ENCODE measurements at regions of chr15 and their contacts with region 1.

Region 1: GRCh38 chr15:64856429-64857145 is 14.9 kb downstream of the PLEKHO2 start:
- DNase-seq: peak; percentile 31 to 94 (median 91)
- H3K4me3 ChIP-seq: peak overlapping the region in 10 of 59 donors; percentile 0 to 22 (median 10)
- H3K27ac ChIP-seq: peak overlapping the region; percentile 66 to 96 (median 90)
- H3K27me3 ChIP-seq: no peaks in the 10 kb centered on the region
- CTCF ChIP-seq: peak in 32 of 56 donors; percentile 13 to 58 (median 34)

Region 2: GRCh38 chr15:64619880-64620839 is 236.4 kb before region 1 on chr15:
- intact Hi-C with region 1: no loop called
- DNase-seq: no peak
- H3K4me3 ChIP-seq: no peak overlapping the region
- H3K27ac ChIP-seq: peak overlapping the region in 6 of 59 donors; percentile 4 to 23 (median 8)
- H3K27me3 ChIP-seq: no peaks in the 10 kb centered on the region
- CTCF ChIP-seq: no peak

Region 3: DNA sequence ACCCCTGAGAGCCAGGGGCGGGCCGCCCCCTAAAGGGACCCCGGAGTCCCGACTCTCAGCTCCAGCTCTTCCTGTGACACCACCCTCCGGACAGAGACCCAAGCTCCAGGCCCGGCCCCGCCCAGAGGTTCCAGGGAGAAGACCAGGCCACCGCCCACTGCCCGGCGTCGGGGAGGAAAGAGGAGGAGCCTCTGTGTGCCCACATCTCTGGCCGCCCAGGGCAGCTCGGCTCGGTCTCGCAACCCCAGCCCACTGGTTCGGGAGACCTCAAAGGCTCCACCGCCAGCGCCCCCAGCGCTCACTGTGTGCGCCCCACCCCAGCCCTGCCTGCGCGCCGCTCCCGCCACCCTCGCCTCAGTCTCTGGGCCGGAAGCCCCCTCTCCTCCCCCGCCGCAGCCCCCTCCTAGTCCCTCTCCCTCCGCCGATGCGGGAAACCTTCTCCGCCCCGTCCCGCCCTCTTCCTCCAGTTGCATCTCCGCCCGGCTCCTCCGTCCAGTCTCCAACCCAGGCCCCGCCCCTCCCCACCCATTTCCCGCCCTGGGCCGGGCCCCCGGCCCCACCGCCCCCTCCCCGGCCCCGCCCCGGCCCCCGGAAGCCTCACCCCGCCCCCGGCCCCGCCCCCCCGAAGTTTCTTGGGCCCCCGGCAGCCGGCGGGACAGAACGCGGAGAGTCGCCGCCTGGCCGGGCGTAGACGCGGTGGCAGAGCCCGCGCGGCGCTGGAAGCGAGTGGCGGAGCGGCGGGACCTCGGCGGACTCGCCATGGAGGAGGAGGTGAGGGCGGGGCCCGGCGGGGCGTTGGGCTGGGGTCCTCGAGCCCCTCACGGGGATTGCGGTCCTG is 15.1 kb before region 1 on chr15 and contains the start of gene PLEKHO2:
- intact Hi-C with region 1: loop called in 1 of 2 experiments (anchors 2 kb)
- DNase-seq: peak; percentile 46 to 94 (median 86)
- H3K4me3 ChIP-seq: peak within 1 kb of the TSS; percentile 54 to 94 (median 83)
- H3K27ac ChIP-seq: peak within 1 kb of the TSS; percentile 69 to 96 (median 90)
- H3K27me3 ChIP-seq: peaks cover 0 to 10% (median 0%) of the 10 kb centered on the region in 45 donors
- CTCF ChIP-seq: peak in 40 of 56 donors; percentile 7 to 56 (median 29)
- total RNA-seq, gene PLEKHO2: 11.7 to 57.7 (median 19.3) TPM

Region 4: GRCh38 chr15:64893481-64894394 is 37.2 kb after region 1 on chr15:
- intact Hi-C with region 1: loop called in 1 of 2 experiments (anchors 5 kb)
- DNase-seq: peak; percentile 62 to 93 (median 87)
- H3K4me3 ChIP-seq: peak overlapping the region in 58 of 59 donors; percentile 8 to 61 (median 42)
- H3K27ac ChIP-seq: peak overlapping the region in 55 of 59 donors; percentile 7 to 89 (median 75)
- H3K27me3 ChIP-seq: no peaks in the 10 kb centered on the region
- CTCF ChIP-seq: peak in 3 of 56 donors; percentile 9 to 32 (median 21)

Region 5: DNA sequence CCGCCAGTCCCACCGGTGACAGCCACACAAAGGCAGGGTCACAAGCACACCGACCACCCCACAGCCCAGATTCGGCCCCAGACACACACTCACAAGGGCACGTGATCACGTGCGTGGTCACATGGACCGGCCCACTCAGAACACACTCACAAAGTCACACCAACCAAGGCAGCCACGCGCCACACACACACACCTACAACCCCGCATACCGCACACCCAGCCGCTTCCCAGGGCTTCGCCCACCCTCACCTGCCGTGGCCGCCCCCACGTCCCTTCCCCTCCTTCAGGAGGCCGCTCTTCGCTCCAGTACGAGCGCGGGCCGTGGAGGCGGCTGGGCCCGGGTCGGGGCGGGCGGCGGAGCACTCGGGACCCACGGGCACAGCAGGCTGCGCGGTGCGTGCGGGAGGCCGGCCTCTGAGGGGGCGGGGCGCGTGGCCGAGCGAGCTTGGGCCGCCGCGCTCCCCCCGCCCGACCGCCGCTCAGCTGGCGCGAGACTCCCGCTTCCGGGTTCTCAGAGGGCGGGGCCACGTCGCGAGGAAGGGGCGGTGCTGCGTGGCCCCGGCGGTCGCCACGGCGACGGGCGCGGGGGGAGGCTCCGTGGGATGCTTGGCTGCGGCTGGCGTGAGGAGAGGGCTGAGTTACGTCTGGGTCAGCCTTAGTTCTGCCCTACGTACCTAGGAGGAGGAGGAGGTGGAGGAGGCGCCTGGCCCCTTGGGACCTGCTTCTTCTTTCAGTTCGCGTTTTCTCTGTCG is 133.0 kb after region 1 on chr15 and contains the start of gene SPG21:
- intact Hi-C with region 1: loop called in 1 of 2 experiments (anchors 10 kb)
- DNase-seq: peak; percentile 77 to 95 (median 90)
- H3K4me3 ChIP-seq: peak within 1 kb of the TSS; percentile 57 to 99 (median 91)
- H3K27ac ChIP-seq: peak within 1 kb of the TSS; percentile 71 to 97 (median 92)
- H3K27me3 ChIP-seq: no peaks in the 10 kb centered on the region
- CTCF ChIP-seq: peak in 8 of 56 donors; percentile 10 to 36 (median 18)
- total RNA-seq, gene SPG21: 41.3 to 69.1 (median 50.6) TPM